OCI-LY7 (cell line): ENCODE measurements at regions of chr6 and their contacts with region 1.

Region 1: GRCh38 chr6:74574794-74575193 is 631.1 kb downstream of the COL12A1 start:
- DNase-seq: peak; percentile 29
- H3K4me3 ChIP-seq: no peak overlapping the region
- H3K27ac ChIP-seq: no peak overlapping the region
- H3K4me1 ChIP-seq: no peaks in the 10 kb centered on the region
- CTCF ChIP-seq: peak; percentile 74

Region 2: GRCh38 chr6:73747289-73747688 is 827.5 kb before region 1 on chr6:
- CTCF ChIA-PET with region 1: no interaction called
- POLR2A ChIA-PET with region 1: no interaction called
- intact Hi-C with region 1: loop called (anchors 5 kb)
- DNase-seq: no peak
- H3K4me3 ChIP-seq: peak overlapping the region; percentile 30
- H3K27ac ChIP-seq: no peak overlapping the region
- H3K4me1 ChIP-seq: no peaks in the 10 kb centered on the region
- CTCF ChIP-seq: no peak

Region 3: DNA sequence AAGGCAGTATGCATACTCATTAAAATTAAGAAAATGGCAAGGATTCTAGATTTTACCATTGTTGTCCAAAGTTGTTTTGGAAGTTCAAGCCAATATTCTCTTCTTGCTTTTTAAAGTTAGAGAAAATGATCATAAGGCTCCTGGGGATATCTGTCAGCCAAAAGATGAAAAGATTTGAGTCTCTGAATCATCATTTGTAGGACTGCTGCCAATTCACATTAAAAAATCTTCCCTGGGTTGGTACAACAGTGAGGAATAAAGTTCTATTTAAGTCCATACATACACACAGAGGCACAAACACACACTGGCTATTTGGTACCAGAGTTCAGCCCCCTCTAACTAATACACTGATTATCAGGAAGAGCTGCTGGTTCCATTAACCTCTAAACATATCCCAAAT is 11.0 kb after region 1 on chr6:
- CTCF ChIA-PET with region 1: no interaction called
- POLR2A ChIA-PET with region 1: no interaction called
- intact Hi-C with region 1: no loop called
- DNase-seq: no peak
- H3K4me3 ChIP-seq: no peak overlapping the region
- H3K27ac ChIP-seq: no peak overlapping the region
- H3K4me1 ChIP-seq: no peaks in the 10 kb centered on the region
- CTCF ChIP-seq: no peak